ENCODE measurements at regions of chr4 and their contacts with region 1.

Region 1: DNA sequence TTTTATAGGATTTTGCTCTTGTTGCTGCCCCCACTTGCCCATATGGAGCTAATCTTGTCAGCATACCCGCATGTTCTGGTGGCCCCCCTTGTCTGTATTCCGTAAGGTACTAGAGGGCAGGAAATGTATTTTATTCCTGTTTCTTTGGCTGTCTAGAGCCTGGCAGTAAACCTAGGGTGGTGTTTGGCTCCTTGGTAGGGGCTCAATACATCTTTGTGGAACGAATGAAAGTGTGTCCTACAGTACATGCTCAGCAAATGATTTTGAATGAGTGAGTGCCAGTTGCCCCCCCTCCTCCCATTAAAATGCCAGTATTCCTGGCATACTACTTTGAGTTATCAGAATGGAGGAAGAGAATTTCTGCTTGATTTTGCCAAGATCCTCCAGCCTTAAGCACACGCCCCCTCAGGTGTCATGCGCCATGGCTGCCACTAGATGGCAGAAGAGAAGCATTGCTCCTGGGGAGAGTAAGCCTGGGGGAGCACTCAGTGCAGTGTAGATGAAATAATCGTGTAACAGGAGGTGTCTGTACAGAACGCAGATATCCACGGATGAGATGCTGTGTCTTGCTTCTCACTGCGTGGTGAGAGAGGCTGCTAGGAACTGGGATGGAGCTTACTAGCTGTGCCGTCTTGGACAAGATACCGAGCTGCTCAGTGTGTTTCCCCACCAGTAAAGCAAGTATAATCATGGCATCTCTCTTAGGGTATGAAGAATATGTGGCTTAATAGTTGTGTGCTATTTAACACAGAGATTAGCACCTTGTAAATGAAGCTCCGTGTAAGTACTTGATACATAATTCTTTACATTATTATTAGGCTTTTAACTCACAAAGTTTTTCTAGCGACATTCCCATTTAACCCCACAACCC is 17.2 kb upstream of the RNF212 start:
- DNase-seq: peak; percentile 55 to 86 (median 75)
- ATAC-seq: peak; percentile 100
- H3K4me3 ChIP-seq: no peak overlapping the region
- H3K4me3 Mint-ChIP-seq: peak overlapping the region in 1 of 10 donors; percentile 46
- H3K27ac ChIP-seq: no peak overlapping the region
- H3K27ac Mint-ChIP-seq: no peak overlapping the region
- H3K4me1 ChIP-seq: no peaks in the 10 kb centered on the region
- H3K4me1 Mint-ChIP-seq: peaks cover 0 to 9% (median 4%) of the 10 kb centered on the region in 7 donors
- H3K27me3 ChIP-seq: no peaks in the 10 kb centered on the region
- H3K27me3 Mint-ChIP-seq: peaks cover 0 to 24% (median 6%) of the 10 kb centered on the region in 5 donors

Region 2: DNA sequence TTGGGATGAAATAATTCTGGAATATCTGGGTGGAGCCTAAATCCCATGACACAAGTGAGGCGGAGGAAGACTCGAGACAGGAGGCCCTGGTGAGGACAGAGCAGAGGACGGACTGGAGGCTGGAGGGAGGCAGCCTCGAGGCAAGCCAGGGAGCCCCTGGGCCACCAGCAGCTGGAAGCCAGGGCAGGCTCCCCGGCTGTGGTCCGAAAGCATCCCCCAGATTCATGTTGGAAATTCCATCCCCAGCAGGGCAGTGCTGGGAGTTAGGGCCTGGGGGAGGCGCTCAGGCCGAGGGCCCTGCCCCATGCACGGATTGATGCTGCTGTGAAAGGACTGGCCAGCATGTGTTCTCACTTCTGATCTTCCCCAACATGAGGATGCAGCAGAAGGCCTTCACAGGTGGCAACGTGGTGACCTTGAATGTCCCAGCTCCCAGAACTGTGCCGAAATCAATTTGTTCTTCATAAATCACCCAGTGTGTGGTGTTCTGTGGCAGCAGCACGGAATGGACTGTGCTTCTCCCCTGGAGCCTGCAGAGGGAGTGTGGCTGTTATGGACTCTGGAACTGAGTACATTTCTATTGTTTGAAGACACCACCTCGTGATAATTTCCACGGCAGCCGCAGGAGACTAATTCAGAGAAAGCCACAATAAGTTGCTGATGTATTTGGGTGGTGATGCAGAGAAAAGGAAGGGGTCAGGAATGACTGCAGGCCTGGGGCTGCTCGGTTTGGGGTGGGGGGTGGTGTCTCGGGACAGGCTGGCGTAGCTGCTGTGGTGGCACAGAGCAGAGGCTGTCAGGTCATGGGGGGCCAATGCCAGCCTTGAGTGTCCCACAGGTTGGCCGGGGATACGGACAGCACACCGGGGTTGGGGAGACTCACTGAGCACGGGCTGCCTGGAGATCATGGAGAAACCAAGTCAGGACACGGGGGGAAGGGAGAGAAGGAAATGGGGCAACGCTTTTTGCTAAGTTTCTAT is 368.1 kb before region 1 on chr4:
- CTCF ChIA-PET with region 1: no interaction called
- POLR2A ChIA-PET with region 1: no interaction called
- intact Hi-C with region 1: no loop called
- DNase-seq: no peak
- ATAC-seq: no peak
- H3K4me3 ChIP-seq: no peak overlapping the region
- H3K4me3 Mint-ChIP-seq: no peak overlapping the region
- H3K27ac ChIP-seq: no peak overlapping the region
- H3K27ac Mint-ChIP-seq: peak overlapping the region in 3 of 9 donors; percentile 64 to 69 (median 65)
- H3K4me1 ChIP-seq: no peaks in the 10 kb centered on the region
- H3K4me1 Mint-ChIP-seq: peaks cover 7 to 30% (median 13%) of the 10 kb centered on the region in 7 donors
- H3K27me3 ChIP-seq: no peaks in the 10 kb centered on the region
- H3K27me3 Mint-ChIP-seq: no peaks in the 10 kb centered on the region

Region 3: DNA sequence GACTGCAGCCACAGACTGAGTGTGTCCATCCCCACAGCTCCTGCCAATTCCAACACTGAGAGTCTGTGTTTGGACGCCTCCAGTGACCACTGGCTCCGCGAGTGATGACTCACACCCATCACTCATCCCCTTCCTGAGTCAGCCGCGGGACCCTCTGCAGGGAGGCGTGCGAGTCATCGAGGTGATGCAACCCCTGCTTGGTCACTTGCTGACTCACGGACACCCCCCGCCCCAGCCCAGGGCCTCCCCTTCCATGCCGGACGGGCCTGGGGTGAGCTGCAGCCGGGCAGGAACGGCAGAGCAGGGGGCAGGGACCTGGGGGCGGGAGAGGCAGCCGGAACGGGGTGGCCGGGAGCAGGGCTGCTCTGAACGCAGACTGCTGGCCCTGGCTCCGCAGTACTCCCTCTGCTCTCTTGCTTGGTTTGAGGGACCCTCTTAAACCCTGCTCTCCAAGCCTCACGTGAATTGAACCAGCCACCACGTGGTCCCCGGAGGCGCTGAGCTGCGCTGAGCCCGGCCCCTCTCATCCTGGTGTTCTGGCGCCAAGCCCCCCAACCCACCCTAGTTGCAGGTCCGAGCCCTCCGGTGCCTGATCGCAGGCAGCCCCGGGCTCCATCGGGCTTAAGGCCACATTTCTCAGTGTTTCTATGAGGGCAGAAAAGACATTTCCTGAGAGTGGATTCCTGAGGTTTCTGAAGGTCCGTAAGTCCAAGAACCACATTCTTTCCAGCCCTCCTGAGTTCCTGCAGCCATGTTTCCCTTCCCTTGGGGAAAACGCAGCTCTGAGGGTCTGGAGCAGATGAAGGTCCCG is 86.7 kb before region 1 on chr4:
- CTCF ChIA-PET with region 1: no interaction called
- POLR2A ChIA-PET with region 1: no interaction called
- intact Hi-C with region 1: no loop called
- DNase-seq: peak in 1 of 9 donors; percentile 42
- ATAC-seq: peak; percentile 80
- H3K4me3 ChIP-seq: no peak overlapping the region
- H3K4me3 Mint-ChIP-seq: no peak overlapping the region
- H3K27ac ChIP-seq: no peak overlapping the region
- H3K27ac Mint-ChIP-seq: no peak overlapping the region
- H3K4me1 ChIP-seq: no peaks in the 10 kb centered on the region
- H3K4me1 Mint-ChIP-seq: peaks cover 0 to 6% (median 4%) of the 10 kb centered on the region in 7 donors
- H3K27me3 ChIP-seq: no peaks in the 10 kb centered on the region
- H3K27me3 Mint-ChIP-seq: peaks cover 17 to 40% (median 21%) of the 10 kb centered on the region in 5 donors

Region 4: GRCh38 chr4:1072830-1073446 is 57.6 kb before region 1 on chr4:
- CTCF ChIA-PET with region 1: no interaction called
- POLR2A ChIA-PET with region 1: no interaction called
- intact Hi-C with region 1: no loop called
- DNase-seq: peak in 8 of 9 donors; percentile 38 to 66 (median 54)
- ATAC-seq: peak; percentile 90
- H3K4me3 ChIP-seq: no peak overlapping the region
- H3K4me3 Mint-ChIP-seq: peak overlapping the region in 2 of 10 donors; percentile 0 to 9
- H3K27ac ChIP-seq: no peak overlapping the region
- H3K27ac Mint-ChIP-seq: peak overlapping the region in 6 of 9 donors; percentile 1 to 38 (median 18)
- H3K4me1 ChIP-seq: peaks cover 0 to 7% of the 10 kb centered on the region in 2 donors
- H3K4me1 Mint-ChIP-seq: peaks cover 7 to 15% (median 14%) of the 10 kb centered on the region in 7 donors
- H3K27me3 ChIP-seq: no peaks in the 10 kb centered on the region
- H3K27me3 Mint-ChIP-seq: peaks cover 8 to 29% (median 13%) of the 10 kb centered on the region in 5 donors

Region 5: GRCh38 chr4:1167247-1167949 is 36.8 kb after region 1 on chr4:
- CTCF ChIA-PET with region 1: interaction called, 3 read pairs
- POLR2A ChIA-PET with region 1: no interaction called
- intact Hi-C with region 1: loop called (anchors 1 kb)
- DNase-seq: peak; percentile 74 to 89 (median 82)
- ATAC-seq: peak; percentile 92
- H3K4me3 ChIP-seq: peak overlapping the region; percentile 90
- H3K4me3 Mint-ChIP-seq: peak overlapping the region; percentile 82 to 90 (median 87)
- H3K27ac ChIP-seq: peak overlapping the region; percentile 74
- H3K27ac Mint-ChIP-seq: peak overlapping the region in 8 of 9 donors; percentile 51 to 86 (median 70)
- H3K4me1 ChIP-seq: peaks cover 3 to 17% of the 10 kb centered on the region in 2 donors
- H3K4me1 Mint-ChIP-seq: peaks cover 8 to 26% (median 18%) of the 10 kb centered on the region in 7 donors
- H3K27me3 ChIP-seq: peaks cover 0 to 9% of the 10 kb centered on the region in 2 donors
- H3K27me3 Mint-ChIP-seq: peaks cover 0 to 21% (median 6%) of the 10 kb centered on the region in 5 donors

Region 6: DNA sequence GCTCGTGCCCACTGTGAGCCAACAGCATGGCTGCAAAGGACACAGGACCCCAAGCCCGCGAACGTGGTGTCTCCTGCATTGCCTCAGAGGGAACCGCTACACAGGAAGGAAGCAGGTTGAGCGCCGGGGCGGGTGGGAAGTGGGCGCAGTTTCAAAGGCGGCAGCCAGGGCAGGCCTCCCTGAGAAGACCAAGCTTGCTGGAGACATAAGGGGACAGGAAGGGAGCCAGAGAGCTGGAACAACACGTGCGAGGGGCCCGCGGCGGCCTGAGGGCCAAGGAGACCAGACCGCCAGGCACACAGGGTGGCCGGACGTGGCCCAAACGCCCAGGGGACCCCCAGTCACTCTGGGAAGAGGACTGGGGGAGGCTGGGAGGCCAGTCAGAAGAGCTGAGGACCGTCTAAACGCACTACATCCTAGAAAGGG is 86.3 kb after region 1 on chr4:
- CTCF ChIA-PET with region 1: no interaction called
- POLR2A ChIA-PET with region 1: no interaction called
- intact Hi-C with region 1: loop called in 1 of 2 experiments (anchors 1 kb)
- DNase-seq: peak; percentile 47 to 75 (median 70)
- ATAC-seq: peak; percentile 83
- H3K4me3 ChIP-seq: peak overlapping the region; percentile 22
- H3K4me3 Mint-ChIP-seq: peak overlapping the region; percentile 61 to 77 (median 76)
- H3K27ac ChIP-seq: peak overlapping the region; percentile 52
- H3K27ac Mint-ChIP-seq: peak overlapping the region; percentile 26 to 84 (median 67)
- H3K4me1 ChIP-seq: peaks cover 25 to 27% of the 10 kb centered on the region in 2 donors
- H3K4me1 Mint-ChIP-seq: peaks cover 26 to 50% (median 32%) of the 10 kb centered on the region in 7 donors
- H3K27me3 ChIP-seq: no peaks in the 10 kb centered on the region
- H3K27me3 Mint-ChIP-seq: no peaks in the 10 kb centered on the region

Region 7: DNA sequence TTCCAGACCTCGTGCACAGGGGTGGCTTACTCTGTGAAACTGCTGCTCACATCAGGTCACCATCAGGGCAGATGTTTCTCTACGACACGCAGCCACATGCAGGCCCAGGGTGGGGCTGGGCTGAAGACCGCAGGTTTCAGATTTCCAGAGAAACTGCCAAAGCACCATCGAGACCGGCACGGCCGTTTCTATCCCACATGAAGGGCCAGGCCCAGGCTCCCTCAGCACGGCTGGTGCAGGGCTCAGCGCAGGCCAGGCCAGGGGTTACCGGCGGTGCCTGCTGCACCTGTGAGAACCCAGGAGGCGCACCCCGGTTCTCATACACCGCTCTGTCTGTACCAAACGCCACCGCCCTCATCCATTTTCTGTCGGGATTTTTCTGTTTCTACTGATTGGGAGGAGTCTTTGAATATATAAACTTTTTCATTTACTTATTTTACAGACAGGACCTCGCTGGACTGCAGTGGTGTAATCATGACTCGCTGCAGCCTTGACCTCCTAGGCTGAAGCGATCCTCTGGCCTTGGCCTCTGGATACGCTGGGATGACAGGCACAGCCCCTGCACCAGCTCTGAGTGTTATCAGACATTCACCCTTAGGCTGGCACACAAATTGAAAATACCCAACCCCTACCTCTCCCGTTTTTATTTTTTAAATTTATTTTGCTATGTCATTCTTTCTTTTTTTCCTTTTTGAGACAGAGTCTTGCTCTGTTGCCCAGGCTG is 101.2 kb after region 1 on chr4:
- CTCF ChIA-PET with region 1: no interaction called
- POLR2A ChIA-PET with region 1: no interaction called
- intact Hi-C with region 1: no loop called
- DNase-seq: no peak
- ATAC-seq: no peak
- H3K4me3 ChIP-seq: no peak overlapping the region
- H3K4me3 Mint-ChIP-seq: no peak overlapping the region
- H3K27ac ChIP-seq: no peak overlapping the region
- H3K27ac Mint-ChIP-seq: peak overlapping the region in 1 of 9 donors; percentile 12
- H3K4me1 ChIP-seq: no peaks in the 10 kb centered on the region
- H3K4me1 Mint-ChIP-seq: peaks cover 0 to 16% (median 6%) of the 10 kb centered on the region in 7 donors
- H3K27me3 ChIP-seq: no peaks in the 10 kb centered on the region
- H3K27me3 Mint-ChIP-seq: no peaks in the 10 kb centered on the region

Region 8: GRCh38 chr4:1351854-1352633 is 221.5 kb after region 1 on chr4:
- CTCF ChIA-PET with region 1: interaction called, 12 read pairs
- POLR2A ChIA-PET with region 1: no interaction called
- intact Hi-C with region 1: loop called (anchors 1 kb)
- DNase-seq: peak; percentile 71 to 91 (median 83)
- ATAC-seq: peak; percentile 45
- H3K4me3 ChIP-seq: no peak overlapping the region
- H3K4me3 Mint-ChIP-seq: peak overlapping the region in 2 of 10 donors; percentile 50 to 53
- H3K27ac ChIP-seq: peak overlapping the region; percentile 52
- H3K27ac Mint-ChIP-seq: peak overlapping the region in 8 of 9 donors; percentile 48 to 91 (median 74)
- H3K4me1 ChIP-seq: peaks cover 10 to 24% of the 10 kb centered on the region in 2 donors
- H3K4me1 Mint-ChIP-seq: peaks cover 20 to 42% (median 29%) of the 10 kb centered on the region in 7 donors
- H3K27me3 ChIP-seq: no peaks in the 10 kb centered on the region
- H3K27me3 Mint-ChIP-seq: no peaks in the 10 kb centered on the region

Region 9: GRCh38 chr4:1604711-1605205 is 474.2 kb after region 1 on chr4:
- CTCF ChIA-PET with region 1: no interaction called
- POLR2A ChIA-PET with region 1: no interaction called
- intact Hi-C with region 1: loop called in 1 of 2 experiments (anchors 1 kb)
- DNase-seq: peak in 7 of 9 donors; percentile 55 to 81 (median 70)
- ATAC-seq: peak; percentile 80
- H3K4me3 ChIP-seq: peak overlapping the region; percentile 46
- H3K4me3 Mint-ChIP-seq: peak overlapping the region in 9 of 10 donors; percentile 55 to 84 (median 75)
- H3K27ac ChIP-seq: peak overlapping the region; percentile 45
- H3K27ac Mint-ChIP-seq: peak overlapping the region in 8 of 9 donors; percentile 77 to 97 (median 86)
- H3K4me1 ChIP-seq: peaks cover 10 to 29% of the 10 kb centered on the region in 2 donors
- H3K4me1 Mint-ChIP-seq: peaks cover 0 to 35% (median 13%) of the 10 kb centered on the region in 7 donors
- H3K27me3 ChIP-seq: no peaks in the 10 kb centered on the region
- H3K27me3 Mint-ChIP-seq: no peaks in the 10 kb centered on the region